ENCODE measurements at regions of chr3 and their contacts with region 1.

Region 1: GRCh38 chr3:30286007-30286669 is 320.3 kb upstream of the TGFBR2 start:
- DNase-seq: peak; percentile 68
- ATAC-seq: peak; percentile 40
- H3K4me3 ChIP-seq: peak overlapping the region in 1 of 2 experiments; percentile 16; a peak in 2 of 4 replicates
- H3K27ac ChIP-seq: peak overlapping the region; percentile 17; the same call in 1 of the 2 replicates
- H3K4me1 ChIP-seq: peaks cover 34 to 76% of the 10 kb centered on the region in 2 experiments
- H3K27me3 ChIP-seq: no peaks in the 10 kb centered on the region
- CTCF ChIP-seq: no peak
- POLR2A ChIP-seq: no peak
- RAD21 ChIP-seq: 0 out of 2 replicates have a peak, but pooled peaks have one; percentile 8

Region 2: GRCh38 chr3:30112902-30113484 is 173.1 kb before region 1 on chr3:
- CTCF ChIA-PET with region 1: no interaction called
- POLR2A ChIA-PET with region 1: no interaction called
- RAD21 ChIA-PET with region 1: no interaction called
- intact Hi-C with region 1: loop called (anchors 10 kb)
- DNase-seq: peak; percentile 23
- ATAC-seq: peak; percentile 66
- H3K4me3 ChIP-seq: no peak overlapping the region
- H3K27ac ChIP-seq: no peak overlapping the region
- H3K4me1 ChIP-seq: no peaks in the 10 kb centered on the region; a peak in 1 of 4 replicates
- H3K27me3 ChIP-seq: no peaks in the 10 kb centered on the region
- CTCF ChIP-seq: peak; percentile 55 to 72 (median 68); a peak in 5 of 6 replicates
- POLR2A ChIP-seq: no peak
- RAD21 ChIP-seq: peak; percentile 79

Measured in HCT116 (cell line).